ENCODE measurements at regions of chr1 and their contacts with region 1.

Region 1: DNA sequence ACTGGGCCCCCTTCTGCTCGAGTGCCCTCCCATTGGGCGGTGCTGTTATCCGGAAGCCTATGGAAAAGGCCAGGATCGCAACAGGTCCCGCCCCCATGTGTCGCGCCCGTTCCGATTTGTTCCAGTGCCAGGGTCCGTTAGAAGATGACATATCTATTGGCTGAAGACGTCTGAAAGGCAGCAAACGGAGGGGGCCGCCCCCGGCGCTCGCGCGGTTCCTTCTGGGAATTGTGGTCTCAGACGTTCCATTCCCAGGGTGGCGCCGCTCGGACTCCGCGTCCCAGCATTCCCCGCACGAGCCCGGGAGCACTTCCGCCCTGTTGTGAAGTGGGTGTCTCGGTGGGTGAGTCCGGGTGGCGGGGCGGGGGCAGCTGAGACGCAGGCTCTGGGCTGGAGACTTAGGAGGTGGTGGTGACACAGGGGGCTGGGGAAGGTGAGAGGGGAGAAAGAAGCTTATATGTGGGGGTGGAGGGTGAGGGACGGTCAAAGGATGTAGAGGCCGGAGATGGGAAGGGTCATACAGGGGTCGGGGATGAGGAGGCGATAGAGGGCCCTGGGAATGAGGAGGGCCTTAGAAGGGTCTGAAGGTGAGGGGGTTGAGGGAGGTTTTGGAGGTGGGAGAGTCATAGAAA is at the start of gene ZSCAN20:
- DNase-seq: peak; percentile 89
- ATAC-seq: peak; percentile 96
- H3K4me3 ChIP-seq: peak within 1 kb of the TSS; percentile 74
- H3K27ac ChIP-seq: peak within 1 kb of the TSS; percentile 55
- H3K4me1 ChIP-seq: peaks cover 7% of the 10 kb centered on the region
- H3K27me3 ChIP-seq: no peaks in the 10 kb centered on the region
- CTCF ChIP-seq: no peak
- EP300 ChIP-seq: no peak
- POLR2A ChIP-seq: peak; percentile 72
- RAD21 ChIP-seq: no peak
- polyA plus RNA-seq, gene ZSCAN20: 0.35 to 0.37 TPM

Region 2: DNA sequence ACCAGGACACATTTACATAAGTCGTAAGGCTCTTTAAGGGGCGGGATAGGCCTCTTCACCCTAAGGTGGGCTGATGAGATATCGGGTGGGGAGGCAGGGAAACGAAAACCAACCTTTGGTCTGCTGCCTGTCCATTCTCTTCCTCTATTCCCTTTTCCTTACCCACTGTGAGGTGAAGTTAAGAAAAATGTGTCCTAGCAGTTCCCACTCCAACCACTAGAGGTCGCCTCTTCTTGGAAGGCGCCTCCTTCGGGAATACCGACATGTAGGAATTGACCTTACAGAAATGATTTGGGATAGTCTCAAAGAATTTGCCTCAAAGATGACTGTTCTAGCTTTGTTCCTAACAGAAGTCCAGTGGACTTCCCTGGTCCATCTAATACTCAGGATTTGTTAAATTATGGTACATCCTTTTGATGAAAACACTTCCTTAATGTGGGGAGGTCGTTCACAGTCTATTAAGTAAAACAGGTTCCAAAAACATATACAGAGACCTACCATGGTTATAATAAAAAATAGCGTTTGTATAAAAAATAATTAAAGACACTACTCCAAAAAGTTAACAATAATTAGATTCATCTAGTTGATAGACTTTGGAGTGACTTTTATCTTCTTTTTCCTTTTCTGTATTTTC is 377.4 kb before region 1 on chr1:
- CTCF ChIA-PET with region 1: interaction called, 13 read pairs
- POLR2A ChIA-PET with region 1: no interaction called
- RAD21 ChIA-PET with region 1: no interaction called
- SMC1A ChIA-PET with region 1: interaction called, 5 read pairs
- in situ Hi-C with region 1: no loop called
- intact Hi-C with region 1: no loop called
- DNase-seq: no peak
- ATAC-seq: no peak
- H3K4me3 ChIP-seq: no peak overlapping the region
- H3K27ac ChIP-seq: no peak overlapping the region
- H3K4me1 ChIP-seq: peaks cover 6% of the 10 kb centered on the region; the same call in 1 of the 2 replicates
- H3K27me3 ChIP-seq: no peaks in the 10 kb centered on the region
- CTCF ChIP-seq: peak; percentile 83 to 99 (median 96)
- EP300 ChIP-seq: no peak
- POLR2A ChIP-seq: no peak
- RAD21 ChIP-seq: peak; percentile 49

Region 3: GRCh38 chr1:33137800-33138199 is 334.7 kb before region 1 on chr1:
- CTCF ChIA-PET with region 1: interaction called, 13 read pairs
- POLR2A ChIA-PET with region 1: no interaction called
- RAD21 ChIA-PET with region 1: no interaction called
- SMC1A ChIA-PET with region 1: interaction called, 6 read pairs
- in situ Hi-C with region 1: no loop called
- intact Hi-C with region 1: no loop called
- DNase-seq: no peak
- ATAC-seq: peak; percentile 74
- H3K4me3 ChIP-seq: no peak overlapping the region
- H3K27ac ChIP-seq: no peak overlapping the region
- H3K4me1 ChIP-seq: no peaks in the 10 kb centered on the region
- H3K27me3 ChIP-seq: no peaks in the 10 kb centered on the region
- CTCF ChIP-seq: peak; percentile 48 to 68 (median 64)
- EP300 ChIP-seq: no peak
- POLR2A ChIP-seq: no peak
- RAD21 ChIP-seq: peak; percentile 54

Region 4: DNA sequence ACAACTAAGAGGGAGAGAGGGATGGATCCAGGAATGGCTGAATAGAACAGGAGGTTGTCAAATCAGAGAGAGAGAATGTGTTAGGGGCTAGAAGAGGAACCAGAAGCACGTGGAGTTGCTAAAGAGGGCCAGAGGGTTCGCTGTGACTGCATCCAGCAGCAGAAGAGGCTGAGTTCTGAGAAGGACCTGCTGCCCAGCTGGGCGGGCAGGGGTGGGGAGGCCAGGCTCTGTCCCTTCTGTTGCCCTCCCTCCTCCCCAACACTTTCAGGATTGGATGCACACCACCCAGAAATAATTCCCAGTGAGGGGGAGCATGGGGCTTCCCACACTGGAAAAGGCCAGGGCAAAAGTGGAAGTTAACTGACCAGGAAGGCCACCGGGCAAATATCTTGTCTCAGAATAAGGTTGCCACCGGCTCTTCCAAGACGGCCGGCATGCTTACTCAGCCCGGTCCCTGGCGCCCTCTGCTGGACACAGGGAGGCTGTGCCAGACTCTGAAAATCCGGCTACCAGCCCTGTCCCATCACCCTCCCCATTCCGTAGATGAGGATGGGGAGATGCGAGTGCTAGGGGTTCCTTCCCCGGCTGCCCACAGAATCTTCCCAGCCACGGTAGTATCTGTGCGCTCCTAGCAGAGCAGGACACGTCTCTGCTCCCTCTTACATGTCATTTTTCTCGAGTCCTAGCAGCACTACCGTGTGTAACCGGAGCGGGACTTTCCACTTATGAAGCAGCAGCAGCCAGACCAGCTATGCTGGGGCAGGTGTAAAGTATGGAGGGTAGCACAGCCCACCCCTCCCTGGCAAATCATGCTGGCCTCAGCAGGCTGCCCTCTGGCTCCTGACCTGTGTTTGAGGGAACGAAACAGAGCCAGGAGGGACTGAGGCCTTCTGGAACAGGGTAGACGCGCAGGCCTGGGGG is 104.7 kb before region 1 on chr1:
- CTCF ChIA-PET with region 1: interaction called, 23 read pairs
- POLR2A ChIA-PET with region 1: no interaction called
- RAD21 ChIA-PET with region 1: interaction called, 15 read pairs
- SMC1A ChIA-PET with region 1: interaction called, 17 read pairs
- in situ Hi-C with region 1: loop called (anchors 5 kb)
- intact Hi-C with region 1: loop called (anchors 1 kb)
- DNase-seq: no peak
- ATAC-seq: peak; percentile 97
- H3K4me3 ChIP-seq: no peak overlapping the region
- H3K27ac ChIP-seq: no peak overlapping the region
- H3K4me1 ChIP-seq: no peaks in the 10 kb centered on the region
- H3K27me3 ChIP-seq: peaks cover 0 to 6% of the 10 kb centered on the region in 2 experiments; a peak in 1 of 4 replicates
- CTCF ChIP-seq: peak; percentile 96 to 99 (median 97); a peak in 5 of 6 replicates
- EP300 ChIP-seq: no peak
- POLR2A ChIP-seq: no peak
- RAD21 ChIP-seq: peak; percentile 98

Region 5: GRCh38 chr1:33399375-33399774 is 73.1 kb before region 1 on chr1:
- CTCF ChIA-PET with region 1: no interaction called
- POLR2A ChIA-PET with region 1: no interaction called
- RAD21 ChIA-PET with region 1: no interaction called
- SMC1A ChIA-PET with region 1: no interaction called
- in situ Hi-C with region 1: no loop called
- intact Hi-C with region 1: no loop called
- DNase-seq: no peak
- ATAC-seq: no peak
- H3K4me3 ChIP-seq: no peak overlapping the region
- H3K27ac ChIP-seq: no peak overlapping the region
- H3K4me1 ChIP-seq: 0 out of 2 replicates have a peak, but pooled peaks cover 3% of the 10 kb centered on the region
- H3K27me3 ChIP-seq: no peaks in the 10 kb centered on the region; a peak in 1 of 4 replicates
- CTCF ChIP-seq: no peak
- EP300 ChIP-seq: no peak
- POLR2A ChIP-seq: no peak
- RAD21 ChIP-seq: no peak

Region 6: GRCh38 chr1:33455539-33456501 is 16.6 kb before region 1 on chr1:
- CTCF ChIA-PET with region 1: interaction called, 111 read pairs
- POLR2A ChIA-PET with region 1: interaction called, 10 read pairs
- RAD21 ChIA-PET with region 1: interaction called, 54 read pairs
- SMC1A ChIA-PET with region 1: interaction called, 112 read pairs
- in situ Hi-C with region 1: no loop called
- intact Hi-C with region 1: no loop called
- DNase-seq: no peak
- ATAC-seq: peak; percentile 94
- H3K4me3 ChIP-seq: no peak overlapping the region
- H3K27ac ChIP-seq: no peak overlapping the region
- H3K4me1 ChIP-seq: peaks cover 27% of the 10 kb centered on the region
- H3K27me3 ChIP-seq: no peaks in the 10 kb centered on the region
- CTCF ChIP-seq: peak; percentile 74 to 80 (median 74)
- EP300 ChIP-seq: no peak
- POLR2A ChIP-seq: no peak
- RAD21 ChIP-seq: peak; percentile 81

Region 7: GRCh38 chr1:33575324-33575879 is 102.9 kb after region 1 on chr1:
- CTCF ChIA-PET with region 1: no interaction called
- POLR2A ChIA-PET with region 1: no interaction called
- RAD21 ChIA-PET with region 1: no interaction called
- SMC1A ChIA-PET with region 1: no interaction called
- in situ Hi-C with region 1: no loop called
- intact Hi-C with region 1: no loop called
- DNase-seq: no peak
- ATAC-seq: no peak
- H3K4me3 ChIP-seq: no peak overlapping the region
- H3K27ac ChIP-seq: no peak overlapping the region
- H3K4me1 ChIP-seq: no peaks in the 10 kb centered on the region
- H3K27me3 ChIP-seq: no peaks in the 10 kb centered on the region; a peak in 1 of 4 replicates
- CTCF ChIP-seq: no peak
- EP300 ChIP-seq: no peak
- POLR2A ChIP-seq: no peak
- RAD21 ChIP-seq: no peak

Region 8: DNA sequence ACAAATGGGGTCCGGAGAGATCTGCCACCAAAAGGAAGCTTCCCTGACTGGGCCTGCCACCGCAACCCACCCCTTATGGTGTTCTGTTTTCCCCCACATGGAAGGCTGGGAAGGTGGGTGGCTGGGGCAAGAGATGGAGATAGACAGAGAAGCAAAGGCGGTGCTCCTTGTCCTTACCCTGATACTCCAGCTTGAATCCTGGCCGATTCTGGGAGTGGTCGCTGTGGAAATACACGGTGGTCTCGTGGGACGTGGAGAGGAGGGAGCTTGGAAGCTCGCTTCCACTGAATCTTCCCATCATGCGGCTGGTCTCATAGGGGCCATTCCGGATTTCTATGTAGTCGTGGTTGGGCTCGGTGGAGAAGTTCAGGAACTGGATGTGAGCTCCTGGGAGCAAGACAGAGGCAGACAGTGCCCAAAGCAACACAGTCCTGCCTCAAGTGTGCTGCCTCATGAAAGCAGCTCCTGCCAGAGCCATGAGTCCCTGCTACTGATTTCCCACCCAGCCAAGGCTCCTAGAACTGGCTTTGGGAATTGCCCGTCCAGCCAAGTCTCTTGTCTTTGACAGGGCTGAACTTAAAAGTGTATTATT is 138.5 kb after region 1 on chr1:
- CTCF ChIA-PET with region 1: interaction called, 26 read pairs
- POLR2A ChIA-PET with region 1: no interaction called
- RAD21 ChIA-PET with region 1: interaction called, 3 read pairs
- SMC1A ChIA-PET with region 1: interaction called, 5 read pairs
- in situ Hi-C with region 1: no loop called
- intact Hi-C with region 1: loop called (anchors 5 kb)
- DNase-seq: no peak
- ATAC-seq: no peak
- H3K4me3 ChIP-seq: no peak overlapping the region
- H3K27ac ChIP-seq: no peak overlapping the region
- H3K4me1 ChIP-seq: no peaks in the 10 kb centered on the region
- H3K27me3 ChIP-seq: peaks cover 2 to 3% of the 10 kb centered on the region in 2 experiments; a peak in 2 of 4 replicates
- CTCF ChIP-seq: no peak
- EP300 ChIP-seq: no peak
- POLR2A ChIP-seq: no peak
- RAD21 ChIP-seq: no peak

Region 9: GRCh38 chr1:33860671-33861070 is 388.2 kb after region 1 on chr1:
- CTCF ChIA-PET with region 1: no interaction called
- POLR2A ChIA-PET with region 1: no interaction called
- RAD21 ChIA-PET with region 1: no interaction called
- SMC1A ChIA-PET with region 1: no interaction called
- in situ Hi-C with region 1: no loop called
- intact Hi-C with region 1: no loop called
- DNase-seq: no peak
- ATAC-seq: no peak
- H3K4me3 ChIP-seq: no peak overlapping the region
- H3K27ac ChIP-seq: no peak overlapping the region
- H3K4me1 ChIP-seq: no peaks in the 10 kb centered on the region
- H3K27me3 ChIP-seq: no peaks in the 10 kb centered on the region
- CTCF ChIP-seq: no peak
- EP300 ChIP-seq: no peak
- POLR2A ChIP-seq: no peak
- RAD21 ChIP-seq: no peak